MCF 10A (cell line): ENCODE measurements at regions of chr6 and their contacts with region 1.

Region 1: DNA sequence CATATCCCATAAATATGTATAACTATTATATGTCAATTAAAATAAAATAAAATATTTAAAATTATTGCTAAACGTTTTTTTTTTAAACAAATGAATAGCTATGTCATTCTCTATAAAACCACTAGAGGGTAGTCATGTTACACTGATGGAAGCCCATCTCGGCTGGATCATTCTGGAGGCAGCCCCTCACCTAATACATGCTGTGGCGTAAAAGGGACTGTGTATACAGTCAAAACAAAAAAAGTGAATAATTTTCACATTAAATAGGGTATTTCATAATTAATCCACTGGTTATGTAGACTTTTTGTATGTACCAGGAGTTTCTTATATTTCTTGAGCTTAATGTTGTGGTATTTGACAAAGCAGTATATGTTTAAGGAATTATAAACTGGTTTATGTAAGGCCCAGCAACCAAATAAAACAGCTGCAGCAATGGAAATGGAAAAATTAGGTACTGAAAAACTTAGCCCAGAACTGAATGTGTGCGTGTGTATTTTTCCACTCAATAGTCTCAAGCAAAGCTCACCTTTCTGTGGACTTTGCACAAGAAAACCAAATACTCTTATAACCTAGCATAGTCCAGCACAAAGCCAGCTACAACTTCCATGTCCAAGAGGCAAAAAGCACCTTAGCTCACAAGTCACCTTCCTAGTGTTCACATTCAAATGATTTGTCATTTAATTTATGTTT is 81.7 kb downstream of the COL9A1 start:
- DNase-seq: peak; percentile 33
- H3K4me3 Mint-ChIP-seq: no peak overlapping the region
- H3K27ac Mint-ChIP-seq: no peak overlapping the region
- H3K4me1 Mint-ChIP-seq: no peaks in the 10 kb centered on the region
- H3K27me3 Mint-ChIP-seq: peaks cover 100% of the 10 kb centered on the region
- CTCF ChIP-seq: peak; percentile 71

Region 2: DNA sequence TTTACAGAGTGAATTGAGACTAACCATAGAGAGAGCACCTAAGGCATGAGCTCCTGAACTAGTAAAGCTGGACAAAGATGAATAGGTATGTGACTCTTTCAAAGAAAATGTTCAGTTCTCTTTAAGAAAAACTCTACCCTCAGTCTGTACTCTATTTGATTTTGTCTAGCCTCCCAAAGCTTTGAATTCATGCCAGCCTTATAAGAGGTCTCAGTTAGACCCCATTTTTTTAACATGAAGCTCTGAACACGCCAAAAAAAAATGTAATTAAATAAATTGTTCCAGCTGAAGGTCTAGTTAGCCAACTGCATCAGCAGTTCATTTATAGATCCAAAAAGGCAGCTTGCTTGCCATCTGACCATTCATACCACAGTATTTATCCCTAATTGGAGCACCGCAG is 10.1 kb after region 1 on chr6:
- CTCF ChIA-PET with region 1: interaction called, 52 read pairs
- POLR2A ChIA-PET with region 1: no interaction called
- intact Hi-C with region 1: no loop called
- DNase-seq: no peak
- H3K4me3 Mint-ChIP-seq: no peak overlapping the region
- H3K27ac Mint-ChIP-seq: no peak overlapping the region
- H3K4me1 Mint-ChIP-seq: no peaks in the 10 kb centered on the region
- H3K27me3 Mint-ChIP-seq: peaks cover 91% of the 10 kb centered on the region
- CTCF ChIP-seq: no peak

Region 3: GRCh38 chr6:70292193-70292592 is 71.0 kb after region 1 on chr6:
- CTCF ChIA-PET with region 1: interaction called, 13 read pairs
- POLR2A ChIA-PET with region 1: no interaction called
- intact Hi-C with region 1: no loop called
- DNase-seq: no peak
- H3K4me3 Mint-ChIP-seq: no peak overlapping the region
- H3K27ac Mint-ChIP-seq: no peak overlapping the region
- H3K4me1 Mint-ChIP-seq: no peaks in the 10 kb centered on the region
- H3K27me3 Mint-ChIP-seq: peaks cover 65% of the 10 kb centered on the region
- CTCF ChIP-seq: no peak

Region 4: GRCh38 chr6:70955441-70956190 is 734.4 kb after region 1 on chr6:
- CTCF ChIA-PET with region 1: interaction called, 20 read pairs
- POLR2A ChIA-PET with region 1: no interaction called
- intact Hi-C with region 1: loop called (anchors 5 kb)
- DNase-seq: peak; percentile 79
- H3K4me3 Mint-ChIP-seq: peak overlapping the region; percentile 67
- H3K27ac Mint-ChIP-seq: no peak overlapping the region
- H3K4me1 Mint-ChIP-seq: no peaks in the 10 kb centered on the region
- H3K27me3 Mint-ChIP-seq: peaks cover 96% of the 10 kb centered on the region
- CTCF ChIP-seq: peak; percentile 86